IMR-90 (cell line): ENCODE measurements at regions of chr19 and their contacts with region 1.

Region 1: DNA sequence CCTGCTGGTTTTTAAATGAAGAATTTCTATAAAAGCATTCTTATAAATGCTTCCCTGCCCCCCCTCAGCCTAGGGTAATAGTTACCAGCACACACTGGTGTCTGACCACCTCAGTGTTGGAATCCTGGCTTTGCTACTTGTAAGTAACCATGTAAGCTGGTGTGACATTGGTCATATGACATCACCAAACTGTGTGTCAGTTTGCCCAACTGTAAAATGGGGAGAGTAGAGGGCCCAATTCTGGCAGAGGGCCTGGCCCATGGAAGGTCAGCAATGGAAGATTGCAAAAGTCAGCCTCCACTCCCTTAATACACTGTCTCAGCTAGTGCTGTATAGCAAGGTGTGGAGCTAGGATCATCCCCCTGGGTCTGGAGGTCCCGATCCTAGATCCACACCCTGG is 31.6 kb downstream of the ACSBG2 start:
- DNase-seq: no peak
- ATAC-seq: no peak
- H3K4me3 ChIP-seq: no peak overlapping the region
- H3K27ac ChIP-seq: no peak overlapping the region
- H3K4me1 ChIP-seq: no peaks in the 10 kb centered on the region
- H3K27me3 ChIP-seq: no peaks in the 10 kb centered on the region; the same call in 1 of the 2 replicates
- CTCF ChIP-seq: no peak
- POLR2A ChIP-seq: no peak
- RAD21 ChIP-seq: no peak

Region 2: GRCh38 chr19:6238643-6239281 is 71.6 kb after region 1 on chr19:
- CTCF ChIA-PET with region 1: no interaction called
- POLR2A ChIA-PET with region 1: no interaction called
- dilution Hi-C with region 1: no loop called
- in situ Hi-C with region 1: no loop called
- intact Hi-C with region 1: no loop called
- DNase-seq: peak; percentile 34
- ATAC-seq: peak; percentile 31
- H3K4me3 ChIP-seq: no peak overlapping the region
- H3K27ac ChIP-seq: no peak overlapping the region
- H3K4me1 ChIP-seq: peaks cover 28% of the 10 kb centered on the region
- H3K27me3 ChIP-seq: no peaks in the 10 kb centered on the region
- CTCF ChIP-seq: no peak
- POLR2A ChIP-seq: no peak
- RAD21 ChIP-seq: no peak

Region 3: DNA sequence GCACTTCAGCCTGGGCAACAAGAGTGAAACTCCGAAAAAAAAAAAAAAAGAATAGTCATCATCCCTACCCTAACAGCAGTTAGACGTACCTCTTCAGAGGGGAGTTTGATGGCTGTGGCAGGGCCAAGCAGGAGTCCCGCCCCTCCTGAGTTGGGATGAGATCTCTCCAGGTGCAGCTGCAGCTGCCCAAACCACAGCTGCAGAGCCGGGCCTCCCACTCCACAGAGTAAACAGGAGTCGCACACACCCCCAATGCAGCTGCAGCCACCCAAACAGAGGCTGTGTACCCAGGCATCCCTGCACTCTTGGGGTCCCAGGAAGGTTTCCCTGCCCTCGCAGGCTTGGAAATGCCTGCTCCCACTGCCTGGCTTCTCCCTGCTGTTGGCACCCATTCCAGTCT is 130.1 kb after region 1 on chr19:
- CTCF ChIA-PET with region 1: no interaction called
- POLR2A ChIA-PET with region 1: no interaction called
- dilution Hi-C with region 1: no loop called
- in situ Hi-C with region 1: no loop called
- intact Hi-C with region 1: loop called (anchors 2 kb)
- DNase-seq: no peak
- ATAC-seq: no peak
- H3K4me3 ChIP-seq: no peak overlapping the region
- H3K27ac ChIP-seq: no peak overlapping the region
- H3K4me1 ChIP-seq: no peaks in the 10 kb centered on the region
- H3K27me3 ChIP-seq: no peaks in the 10 kb centered on the region; the same call in none of the 2 replicates
- CTCF ChIP-seq: no peak
- POLR2A ChIP-seq: no peak
- RAD21 ChIP-seq: no peak

Region 4: DNA sequence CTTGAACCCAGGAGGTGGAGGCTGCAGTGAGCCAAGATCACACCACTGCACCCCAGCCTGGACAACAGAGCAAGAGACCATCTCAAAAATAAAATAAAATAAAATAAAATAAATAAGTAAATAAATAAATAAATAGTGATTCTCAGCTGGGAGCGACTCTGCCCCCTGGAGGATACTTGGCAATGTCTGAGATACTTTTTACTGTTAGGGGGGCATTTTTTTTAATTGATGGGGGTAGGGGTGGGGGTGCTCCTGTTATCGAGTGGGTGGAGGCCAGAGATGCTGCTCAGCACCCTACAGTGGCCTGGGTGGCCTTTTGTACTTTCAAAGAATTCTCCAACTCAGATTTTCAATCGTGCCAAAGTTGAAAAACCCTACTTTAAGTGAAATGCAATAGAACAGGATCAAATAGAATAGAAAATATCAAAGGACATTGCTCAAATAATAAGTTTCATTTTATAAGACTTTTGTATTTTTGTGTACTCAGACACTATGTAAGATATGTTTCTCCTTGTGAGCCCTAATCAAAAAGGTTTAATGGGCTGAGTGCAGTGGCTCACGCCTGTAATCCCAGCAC is 187.1 kb after region 1 on chr19:
- CTCF ChIA-PET with region 1: no interaction called
- POLR2A ChIA-PET with region 1: no interaction called
- dilution Hi-C with region 1: no loop called
- in situ Hi-C with region 1: no loop called
- intact Hi-C with region 1: loop called (anchors 2 kb)
- DNase-seq: no peak
- ATAC-seq: peak; percentile 35; the same call in 1 of the 2 replicates
- H3K4me3 ChIP-seq: no peak overlapping the region
- H3K27ac ChIP-seq: no peak overlapping the region
- H3K4me1 ChIP-seq: no peaks in the 10 kb centered on the region
- H3K27me3 ChIP-seq: no peaks in the 10 kb centered on the region; the same call in 1 of the 2 replicates
- CTCF ChIP-seq: peak; percentile 54
- POLR2A ChIP-seq: no peak
- RAD21 ChIP-seq: peak; percentile 38